ENCODE measurements at regions of chr12 and their contacts with region 1.

Region 1: GRCh38 chr12:19643635-19644034 is 204.3 kb downstream of the AEBP2 start:
- DNase-seq: peak in 1 of 2 experiments; percentile 57
- H3K4me3 ChIP-seq: no peak overlapping the region
- H3K4me3 Mint-ChIP-seq: no peak overlapping the region
- H3K27ac Mint-ChIP-seq: no peak overlapping the region
- H3K4me1 ChIP-seq: no peaks in the 10 kb centered on the region
- H3K4me1 Mint-ChIP-seq: no peaks in the 10 kb centered on the region
- H3K27me3 ChIP-seq: no peaks in the 10 kb centered on the region
- H3K27me3 Mint-ChIP-seq: no peaks in the 10 kb centered on the region
- CTCF ChIP-seq: peak; percentile 58 to 62

Region 2: DNA sequence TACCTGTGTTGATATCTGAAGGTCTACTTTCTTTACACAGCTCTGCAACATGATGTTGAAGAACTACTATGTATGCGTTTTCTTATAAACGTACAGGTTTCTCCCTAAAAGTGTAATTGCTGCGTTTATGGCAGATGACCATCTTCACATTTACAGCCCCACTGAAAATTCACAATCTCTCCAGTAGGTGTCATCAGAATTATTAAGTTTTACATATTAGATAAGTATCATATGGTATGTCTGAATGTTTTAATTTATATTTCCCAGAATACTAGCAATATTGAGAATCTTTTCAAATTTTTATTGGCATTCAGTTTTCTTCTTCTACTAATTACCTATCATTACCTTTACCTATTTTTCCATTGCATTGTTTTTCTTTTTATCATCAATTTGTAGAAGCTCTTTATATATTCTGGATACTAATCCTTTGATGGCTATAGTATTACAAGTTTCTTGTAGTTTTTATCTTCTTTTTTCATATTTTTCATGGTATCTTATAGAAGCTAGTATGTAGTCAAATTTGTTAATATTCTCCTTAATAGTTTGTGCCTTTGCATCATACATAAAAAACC is 782.3 kb before region 1 on chr12:
- CTCF ChIA-PET with region 1: no interaction called
- POLR2A ChIA-PET with region 1: no interaction called
- intact Hi-C with region 1: loop called (anchors 10 kb)
- DNase-seq: peak in 1 of 2 experiments; percentile 56
- H3K4me3 ChIP-seq: no peak overlapping the region
- H3K4me3 Mint-ChIP-seq: no peak overlapping the region
- H3K27ac Mint-ChIP-seq: no peak overlapping the region
- H3K4me1 ChIP-seq: no peaks in the 10 kb centered on the region
- H3K4me1 Mint-ChIP-seq: no peaks in the 10 kb centered on the region
- H3K27me3 ChIP-seq: no peaks in the 10 kb centered on the region; the same call in 1 of the 2 replicates
- H3K27me3 Mint-ChIP-seq: peaks cover 13% of the 10 kb centered on the region
- CTCF ChIP-seq: peak; percentile 66 to 92

Region 3: GRCh38 chr12:19288603-19289244 is 354.9 kb before region 1 on chr12:
- CTCF ChIA-PET with region 1: no interaction called
- POLR2A ChIA-PET with region 1: no interaction called
- intact Hi-C with region 1: loop called (anchors 5 kb)
- DNase-seq: peak in 1 of 2 experiments; percentile 30
- H3K4me3 ChIP-seq: no peak overlapping the region
- H3K4me3 Mint-ChIP-seq: no peak overlapping the region
- H3K27ac Mint-ChIP-seq: no peak overlapping the region
- H3K4me1 ChIP-seq: peaks cover 4% of the 10 kb centered on the region; the same call in 1 of the 2 replicates
- H3K4me1 Mint-ChIP-seq: no peaks in the 10 kb centered on the region
- H3K27me3 ChIP-seq: no peaks in the 10 kb centered on the region
- H3K27me3 Mint-ChIP-seq: no peaks in the 10 kb centered on the region
- CTCF ChIP-seq: peak; percentile 73 to 83

Region 4: DNA sequence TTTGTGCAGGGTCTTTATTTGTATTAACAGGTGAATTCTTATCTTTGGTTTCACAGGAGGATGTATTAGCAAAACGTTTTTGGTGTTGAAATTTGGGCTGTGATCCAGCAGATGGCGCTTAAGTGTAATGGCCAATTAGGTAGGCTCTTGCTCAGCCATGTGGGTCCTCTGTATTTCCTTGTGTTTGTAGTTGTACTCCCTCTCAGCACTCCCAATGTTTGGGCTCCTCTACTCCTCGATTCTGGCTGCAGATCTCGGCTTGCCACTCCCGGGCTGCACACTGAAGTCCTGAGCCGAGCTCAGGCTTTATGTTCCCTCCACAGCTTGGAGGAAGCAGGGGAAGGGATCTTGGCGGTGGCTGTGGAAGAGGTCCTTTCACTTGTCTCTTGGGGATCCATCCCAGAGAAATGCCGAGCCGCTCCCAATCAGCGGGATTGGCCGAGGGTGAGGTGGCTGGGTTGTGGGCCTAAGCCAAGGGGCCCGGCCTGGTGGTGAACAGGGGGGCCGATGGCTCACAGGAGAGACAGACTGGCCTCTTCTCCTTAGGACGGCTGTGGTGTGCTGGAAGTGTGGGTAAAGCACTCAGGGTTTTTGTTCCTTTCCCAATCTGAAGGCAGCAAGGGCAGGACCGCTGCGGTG is 70.6 kb before region 1 on chr12:
- CTCF ChIA-PET with region 1: interaction called, 3 read pairs
- POLR2A ChIA-PET with region 1: no interaction called
- intact Hi-C with region 1: loop called (anchors 1 kb)
- DNase-seq: peak; percentile 55 to 62
- H3K4me3 ChIP-seq: no peak overlapping the region
- H3K4me3 Mint-ChIP-seq: no peak overlapping the region
- H3K27ac Mint-ChIP-seq: no peak overlapping the region
- H3K4me1 ChIP-seq: 0 out of 2 replicates have a peak, but pooled peaks cover 6% of the 10 kb centered on the region
- H3K4me1 Mint-ChIP-seq: peaks cover 7% of the 10 kb centered on the region
- H3K27me3 ChIP-seq: no peaks in the 10 kb centered on the region
- H3K27me3 Mint-ChIP-seq: no peaks in the 10 kb centered on the region
- CTCF ChIP-seq: peak; percentile 56 to 76

Measured in Caco-2 (cell line).